Activated B cell treated with CpG ODN at 0.5 μM for 24 hours (primary cell): ENCODE measurements at regions of chrX and their contacts with region 1.

Region 1: DNA sequence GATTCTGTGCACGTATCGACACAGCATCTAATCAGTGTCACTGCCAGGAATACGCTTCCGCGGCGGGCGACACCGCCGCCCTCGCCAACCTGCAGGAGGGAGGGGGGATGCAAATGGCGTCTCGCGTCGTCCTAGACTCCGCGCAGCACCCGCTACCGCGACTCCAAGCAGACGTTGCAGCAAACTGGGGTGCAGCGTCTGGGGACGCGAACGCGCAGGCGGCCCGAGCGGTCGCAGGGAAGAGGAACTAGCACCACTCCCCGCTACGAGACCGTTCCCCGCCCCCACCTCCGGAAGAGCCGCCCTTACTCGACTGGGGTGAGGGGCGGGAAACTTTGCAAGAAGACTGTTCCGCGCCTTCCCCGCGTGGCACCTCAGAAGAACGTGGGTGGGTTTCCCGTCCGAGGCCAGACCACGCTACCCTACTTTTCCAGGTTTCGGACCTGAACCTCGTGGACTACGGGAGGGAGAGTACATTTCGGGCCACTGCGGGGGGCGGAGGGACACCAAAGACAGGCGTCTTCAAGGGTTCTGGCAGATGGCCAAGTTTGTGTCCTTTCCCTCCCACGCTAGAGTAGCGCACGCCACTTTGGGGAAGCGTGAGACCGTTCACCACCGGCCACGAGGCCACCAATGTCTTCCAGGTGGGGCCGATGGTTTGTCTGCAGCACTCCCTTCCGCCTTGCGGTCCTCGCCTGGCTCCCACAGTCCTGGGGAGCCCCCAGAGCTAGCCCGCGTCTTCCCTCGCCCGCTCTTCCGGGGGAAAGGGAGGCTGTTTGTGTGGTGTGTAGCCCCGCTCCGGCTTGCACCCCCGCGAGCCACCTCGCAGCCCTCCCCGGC is 78.0 kb upstream of the BCOR start:
- DNase-seq: peak; percentile 69
- ATAC-seq: peak; percentile 51
- H3K4me3 Mint-ChIP-seq: peak overlapping the region; percentile 88
- H3K27ac Mint-ChIP-seq: peak overlapping the region; percentile 98
- H3K4me1 Mint-ChIP-seq: peaks cover 53% of the 10 kb centered on the region
- H3K27me3 Mint-ChIP-seq: no peaks in the 10 kb centered on the region
- CTCF ChIP-seq: no peak

Region 2: GRCh38 chrX:39532761-39533160 is 643.0 kb before region 1 on chrX:
- CTCF ChIA-PET with region 1: no interaction called
- POLR2A ChIA-PET with region 1: interaction called, 11 read pairs
- intact Hi-C with region 1: no loop called
- DNase-seq: no peak
- ATAC-seq: no peak
- H3K4me3 Mint-ChIP-seq: no peak overlapping the region
- H3K27ac Mint-ChIP-seq: no peak overlapping the region
- H3K4me1 Mint-ChIP-seq: no peaks in the 10 kb centered on the region
- H3K27me3 Mint-ChIP-seq: peaks cover 11% of the 10 kb centered on the region
- CTCF ChIP-seq: no peak

Region 3: GRCh38 chrX:40013266-40014195 is 162.2 kb before region 1 on chrX:
- CTCF ChIA-PET with region 1: no interaction called
- POLR2A ChIA-PET with region 1: interaction called, 15 read pairs
- intact Hi-C with region 1: loop called (anchors 1 kb)
- DNase-seq: peak; percentile 41
- ATAC-seq: peak; percentile 47
- H3K4me3 Mint-ChIP-seq: peak overlapping the region; percentile 76
- H3K27ac Mint-ChIP-seq: peak overlapping the region; percentile 56
- H3K4me1 Mint-ChIP-seq: peaks cover 26% of the 10 kb centered on the region
- H3K27me3 Mint-ChIP-seq: no peaks in the 10 kb centered on the region
- CTCF ChIP-seq: no peak

Region 4: DNA sequence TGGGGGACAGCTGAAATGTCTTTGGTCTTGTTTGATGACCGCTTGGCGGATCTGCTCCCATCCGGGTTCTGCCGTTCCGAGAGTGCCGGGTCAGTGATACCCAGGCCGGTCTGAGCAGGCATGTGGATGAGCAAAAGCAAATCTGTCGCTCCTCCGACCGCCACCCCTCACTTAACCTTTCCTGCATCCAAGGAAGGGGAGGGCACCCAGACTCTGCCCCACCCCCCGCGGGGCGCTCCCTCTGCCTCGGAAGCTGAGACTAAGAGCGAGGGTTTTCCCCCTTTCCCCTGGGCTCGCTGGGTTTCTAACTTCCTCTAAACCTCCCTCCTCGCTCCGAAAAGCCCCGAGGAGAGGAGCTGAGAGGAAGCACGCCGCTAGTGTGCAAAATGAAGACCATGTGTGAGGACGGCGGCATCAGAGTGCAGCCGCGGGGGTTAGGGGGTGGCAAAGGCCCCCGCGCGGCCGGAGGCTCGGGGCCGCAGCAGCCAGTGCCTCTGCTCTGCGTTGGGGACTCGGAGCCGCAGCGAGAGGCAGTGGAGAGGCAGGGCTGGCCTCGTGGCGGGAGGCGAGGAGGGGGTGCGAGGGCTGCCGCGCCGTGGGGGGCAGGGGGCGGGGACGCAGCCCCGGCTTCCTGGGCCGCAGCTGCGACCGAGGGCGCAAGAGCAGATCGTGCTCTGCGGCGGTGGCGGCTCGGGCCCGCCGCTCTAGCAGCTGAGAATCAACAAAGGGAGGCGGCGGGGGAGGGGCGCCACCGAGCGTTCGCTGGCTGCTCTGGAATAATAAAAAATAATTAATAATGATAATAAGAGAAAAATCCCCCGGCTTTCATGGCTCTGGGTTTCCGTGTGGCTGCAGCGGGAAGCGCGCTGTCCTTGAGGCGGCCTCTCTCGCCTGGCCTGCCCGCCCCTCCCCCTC is 22.1 kb before region 1 on chrX:
- CTCF ChIA-PET with region 1: no interaction called
- POLR2A ChIA-PET with region 1: interaction called, 72 read pairs
- intact Hi-C with region 1: loop called (anchors 1 kb)
- DNase-seq: peak; percentile 57
- ATAC-seq: peak; percentile 76
- H3K4me3 Mint-ChIP-seq: peak overlapping the region; percentile 80
- H3K27ac Mint-ChIP-seq: peak overlapping the region; percentile 77
- H3K4me1 Mint-ChIP-seq: peaks cover 38% of the 10 kb centered on the region
- H3K27me3 Mint-ChIP-seq: no peaks in the 10 kb centered on the region
- CTCF ChIP-seq: no peak

Region 5: DNA sequence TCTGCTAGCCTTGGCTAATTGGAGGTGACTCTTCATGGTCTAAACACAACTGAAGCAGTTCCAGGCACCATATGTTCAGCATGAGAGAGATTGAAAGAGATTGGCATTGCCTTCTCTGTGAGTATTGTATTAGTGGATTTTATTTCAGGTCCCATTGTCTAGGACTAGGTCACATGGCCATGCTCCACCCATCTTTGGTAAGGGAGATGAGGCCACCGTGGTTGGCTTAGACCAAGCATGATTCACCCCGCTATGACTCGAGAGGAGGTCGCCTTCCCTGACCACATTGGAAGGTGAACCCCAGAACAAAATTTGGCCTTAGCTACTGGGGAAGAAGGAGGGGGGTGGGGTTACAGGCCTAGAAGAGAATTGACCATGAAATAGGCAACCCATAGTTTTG is 31.9 kb after region 1 on chrX:
- CTCF ChIA-PET with region 1: no interaction called
- POLR2A ChIA-PET with region 1: interaction called, 6 read pairs
- intact Hi-C with region 1: loop called (anchors 2 kb)
- DNase-seq: no peak
- ATAC-seq: peak; percentile 45
- H3K4me3 Mint-ChIP-seq: no peak overlapping the region
- H3K27ac Mint-ChIP-seq: no peak overlapping the region
- H3K4me1 Mint-ChIP-seq: peaks cover 12% of the 10 kb centered on the region
- H3K27me3 Mint-ChIP-seq: no peaks in the 10 kb centered on the region
- CTCF ChIP-seq: no peak

Region 6: GRCh38 chrX:40298572-40299479 is 123.1 kb after region 1 on chrX:
- CTCF ChIA-PET with region 1: no interaction called
- POLR2A ChIA-PET with region 1: interaction called, 18 read pairs
- intact Hi-C with region 1: no loop called
- DNase-seq: no peak
- ATAC-seq: no peak
- H3K4me3 Mint-ChIP-seq: no peak overlapping the region
- H3K27ac Mint-ChIP-seq: peak overlapping the region; percentile 63
- H3K4me1 Mint-ChIP-seq: peaks cover 32% of the 10 kb centered on the region
- H3K27me3 Mint-ChIP-seq: no peaks in the 10 kb centered on the region
- CTCF ChIP-seq: no peak

Region 7: GRCh38 chrX:41084044-41084892 is 908.5 kb after region 1 on chrX:
- CTCF ChIA-PET with region 1: no interaction called
- POLR2A ChIA-PET with region 1: interaction called, 3 read pairs
- intact Hi-C with region 1: loop called (anchors 2 kb)
- DNase-seq: peak; percentile 94
- ATAC-seq: peak; percentile 64
- H3K4me3 Mint-ChIP-seq: peak overlapping the region; percentile 90
- H3K27ac Mint-ChIP-seq: peak overlapping the region; percentile 99
- H3K4me1 Mint-ChIP-seq: peaks cover 36% of the 10 kb centered on the region
- H3K27me3 Mint-ChIP-seq: no peaks in the 10 kb centered on the region
- CTCF ChIP-seq: no peak